CD4-positive, alpha-beta memory T cell (primary cell): ENCODE measurements at regions of chr2 and their contacts with region 1.

Region 1: GRCh38 chr2:133844214-133844892 is 276.1 kb upstream of the NCKAP5 start:
- DNase-seq: peak in 4 of 5 donors; percentile 38 to 51 (median 42)
- H3K4me3 ChIP-seq: no peak overlapping the region
- H3K4me3 Mint-ChIP-seq: no peak overlapping the region
- H3K27ac ChIP-seq: no peak overlapping the region
- H3K27ac Mint-ChIP-seq: peak overlapping the region in 2 of 7 donors; percentile 13 to 33
- H3K4me1 ChIP-seq: no peaks in the 10 kb centered on the region
- H3K4me1 Mint-ChIP-seq: peaks cover 3 to 7% (median 6%) of the 10 kb centered on the region in 4 donors
- H3K27me3 ChIP-seq: no peaks in the 10 kb centered on the region
- H3K27me3 Mint-ChIP-seq: peaks cover 2 to 9% of the 10 kb centered on the region in 2 donors

Region 2: DNA sequence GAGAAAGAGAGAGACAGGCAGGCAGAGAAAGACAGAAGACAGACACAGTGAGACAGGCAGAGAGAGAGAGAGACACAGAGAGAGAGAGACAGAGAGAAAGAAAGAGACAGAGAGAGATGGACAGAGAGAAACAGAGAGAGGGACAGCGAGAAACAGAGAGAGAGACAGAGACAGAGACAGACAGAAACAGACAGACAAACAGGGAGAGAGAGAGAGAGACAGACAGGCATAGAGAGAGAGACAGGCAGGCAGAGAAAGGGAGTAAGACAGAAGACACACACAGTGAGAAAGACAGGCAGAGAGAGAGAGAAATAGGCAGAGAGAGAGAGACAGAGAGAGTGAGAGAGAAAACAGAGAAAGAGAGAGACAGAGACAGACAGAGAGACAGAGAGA is 1577.3 kb before region 1 on chr2:
- CTCF ChIA-PET with region 1: interaction called, 12 read pairs
- POLR2A ChIA-PET with region 1: no interaction called
- intact Hi-C with region 1: no loop called
- DNase-seq: no peak
- H3K4me3 ChIP-seq: no peak overlapping the region
- H3K4me3 Mint-ChIP-seq: no peak overlapping the region
- H3K27ac ChIP-seq: no peak overlapping the region
- H3K27ac Mint-ChIP-seq: no peak overlapping the region
- H3K4me1 ChIP-seq: peaks cover 12% of the 10 kb centered on the region
- H3K4me1 Mint-ChIP-seq: peaks cover 0 to 6% (median under 1%) of the 10 kb centered on the region in 4 donors
- H3K27me3 ChIP-seq: no peaks in the 10 kb centered on the region
- H3K27me3 Mint-ChIP-seq: no peaks in the 10 kb centered on the region

Region 3: GRCh38 chr2:132547074-132547687 is 1297.2 kb before region 1 on chr2:
- CTCF ChIA-PET with region 1: interaction called, 11 read pairs
- POLR2A ChIA-PET with region 1: no interaction called
- intact Hi-C with region 1: no loop called
- DNase-seq: peak in 3 of 5 donors; percentile 1 to 7 (median 4)
- H3K4me3 ChIP-seq: no peak overlapping the region
- H3K4me3 Mint-ChIP-seq: no peak overlapping the region
- H3K27ac ChIP-seq: no peak overlapping the region
- H3K27ac Mint-ChIP-seq: no peak overlapping the region
- H3K4me1 ChIP-seq: no peaks in the 10 kb centered on the region
- H3K4me1 Mint-ChIP-seq: no peaks in the 10 kb centered on the region
- H3K27me3 ChIP-seq: no peaks in the 10 kb centered on the region
- H3K27me3 Mint-ChIP-seq: peaks cover 0 to 2% of the 10 kb centered on the region in 2 donors

Region 4: DNA sequence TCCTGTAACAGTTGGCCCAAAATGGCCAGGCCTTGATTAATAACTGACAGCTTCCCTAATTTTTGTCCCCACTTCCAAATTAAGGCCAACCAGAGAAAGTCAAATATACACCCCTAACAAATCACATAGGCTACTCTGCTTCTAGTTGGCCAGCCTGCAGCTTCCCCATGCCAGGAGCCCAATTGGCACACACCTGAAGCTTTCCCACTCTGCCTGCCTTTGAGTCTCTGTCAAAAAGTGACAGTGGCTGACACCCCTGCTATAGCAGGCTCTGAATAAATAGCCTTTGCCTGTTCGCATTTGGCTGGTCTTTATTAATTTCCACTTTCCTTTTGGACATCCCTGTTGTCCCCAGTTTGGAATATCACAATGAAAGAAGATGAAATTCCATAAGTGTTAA is 19.5 kb before region 1 on chr2:
- CTCF ChIA-PET with region 1: interaction called, 10 read pairs
- POLR2A ChIA-PET with region 1: no interaction called
- intact Hi-C with region 1: no loop called
- DNase-seq: no peak
- H3K4me3 ChIP-seq: no peak overlapping the region
- H3K4me3 Mint-ChIP-seq: no peak overlapping the region
- H3K27ac ChIP-seq: no peak overlapping the region
- H3K27ac Mint-ChIP-seq: no peak overlapping the region
- H3K4me1 ChIP-seq: no peaks in the 10 kb centered on the region
- H3K4me1 Mint-ChIP-seq: no peaks in the 10 kb centered on the region
- H3K27me3 ChIP-seq: peaks cover 3% of the 10 kb centered on the region
- H3K27me3 Mint-ChIP-seq: peaks cover 5 to 9% of the 10 kb centered on the region in 2 donors

Region 5: GRCh38 chr2:133855526-133855925 is 11.2 kb after region 1 on chr2:
- CTCF ChIA-PET with region 1: interaction called, 37 read pairs
- POLR2A ChIA-PET with region 1: interaction called, 4 read pairs
- intact Hi-C with region 1: no loop called
- DNase-seq: no peak
- H3K4me3 ChIP-seq: no peak overlapping the region
- H3K4me3 Mint-ChIP-seq: no peak overlapping the region
- H3K27ac ChIP-seq: no peak overlapping the region
- H3K27ac Mint-ChIP-seq: no peak overlapping the region
- H3K4me1 ChIP-seq: no peaks in the 10 kb centered on the region
- H3K4me1 Mint-ChIP-seq: no peaks in the 10 kb centered on the region
- H3K27me3 ChIP-seq: no peaks in the 10 kb centered on the region
- H3K27me3 Mint-ChIP-seq: peaks cover 0 to 11% of the 10 kb centered on the region in 2 donors

Region 6: DNA sequence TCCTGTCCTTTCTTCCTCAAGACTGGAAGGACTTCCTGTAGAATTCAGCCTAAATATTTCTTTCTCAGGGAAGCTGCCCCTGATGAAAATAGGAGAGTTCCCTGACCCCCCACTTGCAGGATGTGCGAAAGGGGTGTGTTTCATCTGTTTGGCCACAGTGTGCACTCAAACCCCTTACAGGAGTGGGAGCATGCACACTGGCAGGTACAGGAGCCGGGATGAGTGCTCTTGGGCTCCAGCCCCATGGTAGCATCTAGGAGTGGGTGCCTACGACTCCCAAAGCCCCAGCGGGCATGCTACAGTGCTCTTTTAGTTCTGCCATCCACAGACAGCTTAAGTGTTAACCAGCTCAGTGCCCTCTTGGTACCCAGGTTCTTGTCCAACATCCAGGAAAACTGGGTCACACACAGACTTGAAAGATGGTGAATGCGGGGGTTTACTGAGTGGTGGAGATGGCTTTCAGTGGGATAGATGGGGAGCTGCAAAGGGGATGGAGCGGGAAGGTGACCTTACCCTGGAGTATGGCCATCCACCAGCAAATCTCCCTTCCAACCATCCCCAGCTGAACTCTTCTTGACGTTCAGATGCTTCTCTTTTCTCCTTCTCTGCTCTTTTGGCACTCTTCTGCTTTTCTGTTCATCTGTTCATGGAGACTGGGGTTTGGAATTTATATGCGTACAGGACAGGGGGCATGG is 18.9 kb after region 1 on chr2:
- CTCF ChIA-PET with region 1: interaction called, 37 read pairs
- POLR2A ChIA-PET with region 1: no interaction called
- intact Hi-C with region 1: no loop called
- DNase-seq: peak in 1 of 5 donors; percentile 20
- H3K4me3 ChIP-seq: no peak overlapping the region
- H3K4me3 Mint-ChIP-seq: no peak overlapping the region
- H3K27ac ChIP-seq: no peak overlapping the region
- H3K27ac Mint-ChIP-seq: no peak overlapping the region
- H3K4me1 ChIP-seq: no peaks in the 10 kb centered on the region
- H3K4me1 Mint-ChIP-seq: no peaks in the 10 kb centered on the region
- H3K27me3 ChIP-seq: no peaks in the 10 kb centered on the region
- H3K27me3 Mint-ChIP-seq: peaks cover 10% of the 10 kb centered on the region in 2 donors